Left colon (tissue), 2 donors: ENCODE measurements at regions of chr4 and their contacts with region 1.

Region 1: GRCh38 chr4:57043347-57044251 is 64.9 kb downstream of the POLR2B start:
- DNase-seq: no peak
- ATAC-seq: no peak

Region 2: GRCh38 chr4:57110640-57111511 is 67.3 kb after region 1 on chr4:
- intact Hi-C with region 1: loop called in 1 of 2 experiments (anchors 5 kb)
- DNase-seq: peak; percentile 19 to 41
- ATAC-seq: peak; percentile 43

Region 3: DNA sequence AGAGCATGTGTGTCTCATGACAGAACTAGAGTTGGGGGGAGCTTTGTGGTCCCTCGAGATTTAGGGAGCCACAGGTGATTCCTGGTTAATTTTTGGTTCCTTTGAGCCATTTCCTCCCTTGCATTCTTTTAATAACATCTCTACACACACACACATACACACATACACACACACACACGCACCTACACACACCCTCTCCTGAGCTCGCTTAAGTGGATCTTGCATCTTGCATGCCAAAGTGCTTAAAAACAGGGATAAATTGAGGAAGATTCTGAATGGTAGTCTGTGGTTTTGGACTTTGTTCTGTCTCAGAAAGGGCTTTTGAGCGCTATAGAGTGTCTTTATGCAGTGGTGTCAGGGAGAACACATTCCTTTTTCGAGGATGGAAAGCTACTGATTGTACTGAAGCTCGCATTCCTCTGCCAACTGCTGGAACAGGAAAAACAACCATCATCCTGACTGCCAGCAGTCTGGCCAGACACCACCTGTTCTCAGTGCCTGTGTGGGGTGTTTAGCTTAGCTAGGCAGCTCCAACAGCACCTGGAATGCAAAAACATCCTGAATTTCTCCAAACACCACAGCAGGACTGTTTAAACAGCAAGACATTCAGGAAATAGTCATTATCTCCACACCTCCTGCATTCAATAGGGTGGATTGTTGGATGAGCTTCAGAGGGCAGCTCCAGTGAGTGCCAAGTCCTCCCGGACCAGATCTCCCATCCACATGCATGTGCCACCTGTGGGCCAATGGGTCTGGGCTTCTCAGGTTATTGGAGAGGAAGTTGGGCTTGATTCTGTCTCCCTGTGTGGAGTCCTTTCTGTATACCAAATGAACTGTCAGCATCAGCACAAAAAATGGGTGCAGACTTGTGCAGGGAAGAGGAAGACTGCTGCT is 88.5 kb after region 1 on chr4:
- intact Hi-C with region 1: no loop called
- DNase-seq: no peak
- ATAC-seq: no peak